Endothelial cell of umbilical vein (primary cell): ENCODE measurements at regions of chr1 and their contacts with region 1.

Region 1: GRCh38 chr1:3727042-3727824 is 25.0 kb upstream of the CCDC27 start:
- DNase-seq: no peak
- H3K4me3 ChIP-seq: no peak overlapping the region
- H3K27ac ChIP-seq: no peak overlapping the region
- H3K4me1 ChIP-seq: no peaks in the 10 kb centered on the region
- H3K27me3 ChIP-seq: no peaks in the 10 kb centered on the region
- CTCF ChIP-seq: peak; percentile 31 to 54
- POLR2A ChIP-seq: no peak

Region 2: DNA sequence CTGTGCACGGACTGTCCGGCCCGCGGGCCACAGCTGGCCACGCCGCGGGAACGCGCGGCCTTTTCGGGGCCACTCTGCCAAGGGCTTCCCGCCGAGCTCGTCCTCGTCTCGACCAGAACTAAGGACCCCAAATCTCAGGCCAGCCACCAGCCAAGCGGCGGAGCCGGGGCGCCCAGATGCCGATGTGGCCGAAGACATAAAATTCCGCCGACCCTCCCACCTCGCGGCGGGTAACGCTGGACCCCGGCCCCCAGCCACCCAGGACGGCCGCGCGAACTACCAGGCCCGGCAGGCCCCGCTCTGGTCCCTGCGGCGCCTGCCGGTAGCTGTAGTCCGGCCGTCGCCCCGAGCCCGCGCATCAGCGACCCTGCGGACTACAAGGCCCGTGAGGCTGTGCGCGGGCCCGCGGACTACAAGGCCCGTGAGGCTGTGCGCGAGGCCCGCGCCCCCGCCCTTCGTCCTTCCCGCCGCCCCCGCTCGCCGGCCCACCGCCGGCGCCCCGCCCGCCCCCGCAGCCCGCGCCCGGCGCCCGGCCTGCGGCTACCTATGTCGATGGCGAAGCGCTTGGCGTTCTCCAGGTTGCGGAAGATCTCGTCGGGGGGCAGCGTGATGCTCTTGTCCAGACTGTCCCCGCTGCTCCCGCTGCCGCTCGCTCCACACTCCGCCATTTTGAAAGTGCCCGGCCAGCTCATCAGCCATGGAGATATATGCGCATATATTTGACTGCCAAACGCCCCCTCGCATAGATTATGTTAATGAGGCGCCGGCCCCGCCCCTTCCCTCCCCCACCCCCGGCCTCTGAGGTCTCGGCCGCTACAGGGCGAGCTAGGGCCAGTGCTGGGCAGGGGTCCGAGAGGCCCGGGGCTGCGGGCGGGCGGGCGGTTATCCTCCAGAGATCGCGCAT is 1201.1 kb before region 1 on chr1 and contains the start of gene PANK4:
- CTCF ChIA-PET with region 1: no interaction called
- POLR2A ChIA-PET with region 1: interaction called, 11 read pairs
- dilution Hi-C with region 1: no loop called
- intact Hi-C with region 1: no loop called
- DNase-seq: peak; percentile 84
- H3K4me3 ChIP-seq: peak within 1 kb of the TSS; percentile 75 to 97 (median 91)
- H3K27ac ChIP-seq: peak within 1 kb of the TSS; percentile 58
- H3K4me1 ChIP-seq: peaks cover 17% of the 10 kb centered on the region
- H3K27me3 ChIP-seq: peaks cover 10 to 17% of the 10 kb centered on the region in 2 experiments
- CTCF ChIP-seq: no peak
- POLR2A ChIP-seq: peak; percentile 82
- total RNA-seq, gene PANK4: 34.0 and 34.7 TPM in 2 replicates

Region 3: GRCh38 chr1:3564921-3565827 is 162.1 kb before region 1 on chr1:
- CTCF ChIA-PET with region 1: interaction called, 11 read pairs
- POLR2A ChIA-PET with region 1: no interaction called
- dilution Hi-C with region 1: no loop called
- intact Hi-C with region 1: loop called (anchors 1 kb)
- DNase-seq: peak; percentile 26
- H3K4me3 ChIP-seq: no peak overlapping the region
- H3K27ac ChIP-seq: no peak overlapping the region
- H3K4me1 ChIP-seq: no peaks in the 10 kb centered on the region
- H3K27me3 ChIP-seq: no peaks in the 10 kb centered on the region
- CTCF ChIP-seq: peak; percentile 89 to 90
- POLR2A ChIP-seq: no peak

Region 4: DNA sequence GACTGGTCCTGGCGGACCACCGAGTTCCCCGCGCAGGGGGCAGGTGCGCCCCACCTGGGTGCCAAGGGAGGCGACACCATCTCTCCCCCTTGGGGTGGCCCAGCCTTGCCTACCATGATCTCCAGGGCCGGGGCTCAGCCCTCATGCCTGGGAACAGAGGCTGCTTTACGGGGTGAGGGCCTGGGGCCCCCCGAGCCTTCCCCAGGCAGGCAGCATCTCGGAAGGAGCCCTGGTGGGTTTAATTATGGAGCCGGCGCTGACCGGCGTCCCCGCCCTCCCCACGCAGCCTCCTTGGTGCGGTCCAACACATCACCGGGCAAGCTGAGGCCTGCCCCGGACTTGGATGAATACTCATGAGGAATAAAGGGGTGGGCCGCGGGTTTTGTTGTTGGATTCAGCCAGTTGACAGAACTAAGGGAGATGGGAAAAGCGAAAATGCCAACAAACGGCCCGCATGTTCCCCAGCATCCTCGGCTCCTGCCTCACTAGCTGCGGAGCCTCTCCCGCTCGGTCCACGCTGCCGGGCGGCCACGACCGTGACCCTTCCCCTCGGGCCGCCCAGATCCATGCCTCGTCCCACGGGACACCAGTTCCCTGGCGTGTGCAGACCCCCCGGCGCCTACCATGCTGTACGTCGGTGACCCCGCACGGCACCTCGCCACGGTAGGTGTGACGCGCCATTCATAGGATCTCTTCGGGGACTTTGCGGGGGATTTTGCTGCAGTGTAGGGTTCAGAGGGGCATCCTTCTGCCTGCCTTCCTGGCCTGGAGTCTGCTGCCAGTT is 36.8 kb before region 1 on chr1:
- CTCF ChIA-PET with region 1: interaction called, 31 read pairs
- POLR2A ChIA-PET with region 1: no interaction called
- dilution Hi-C with region 1: no loop called
- intact Hi-C with region 1: loop called (anchors 1 kb)
- DNase-seq: no peak
- H3K4me3 ChIP-seq: no peak overlapping the region
- H3K27ac ChIP-seq: no peak overlapping the region
- H3K4me1 ChIP-seq: no peaks in the 10 kb centered on the region
- H3K27me3 ChIP-seq: no peaks in the 10 kb centered on the region
- CTCF ChIP-seq: no peak
- POLR2A ChIP-seq: no peak

Region 5: DNA sequence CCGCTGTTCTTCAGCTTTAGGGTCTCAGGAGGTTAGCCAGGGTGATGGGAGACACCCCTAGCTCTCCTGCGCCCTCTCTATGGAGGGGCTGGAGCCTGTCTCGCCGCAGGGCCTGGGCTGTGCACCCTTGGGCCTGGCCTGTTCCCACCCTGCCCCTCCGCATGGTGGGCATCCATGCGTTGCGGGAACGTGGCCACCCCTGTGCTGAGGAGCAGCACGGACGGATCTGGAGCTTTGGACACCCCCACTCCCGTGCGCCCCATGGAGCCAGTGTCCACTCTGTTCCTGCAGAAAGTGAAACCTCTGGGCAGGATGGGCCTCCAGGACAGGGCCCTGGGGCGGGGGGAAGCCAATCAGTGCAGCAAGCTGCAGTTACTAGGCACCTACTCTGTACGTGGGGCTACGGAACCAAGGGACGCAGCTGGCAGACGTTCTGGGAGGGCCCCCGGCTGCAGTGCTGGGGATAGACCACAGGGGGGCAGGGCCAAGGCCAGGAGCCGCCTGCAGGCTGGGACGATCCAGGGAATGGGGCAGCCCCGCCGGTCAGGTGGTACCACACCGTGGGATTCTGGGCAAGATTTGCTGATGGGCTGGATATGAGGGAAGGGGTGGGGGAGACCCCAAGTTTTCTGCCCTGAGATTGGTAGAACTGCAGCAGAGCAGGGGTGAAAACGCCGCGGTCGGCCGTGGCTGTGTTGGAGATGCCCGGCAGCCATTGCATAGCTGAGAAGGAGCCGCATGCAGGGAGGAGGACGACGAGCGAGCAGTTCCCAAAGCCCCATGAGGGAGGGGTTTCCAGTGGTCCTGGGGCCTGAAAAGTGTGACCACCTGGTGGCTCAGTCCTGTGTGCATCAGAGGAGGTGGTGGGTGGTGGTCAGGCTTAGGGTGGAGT is 31.7 kb before region 1 on chr1:
- CTCF ChIA-PET with region 1: interaction called, 31 read pairs
- POLR2A ChIA-PET with region 1: no interaction called
- dilution Hi-C with region 1: no loop called
- intact Hi-C with region 1: loop called (anchors 1 kb)
- DNase-seq: peak; percentile 26
- H3K4me3 ChIP-seq: no peak overlapping the region
- H3K27ac ChIP-seq: no peak overlapping the region
- H3K4me1 ChIP-seq: no peaks in the 10 kb centered on the region
- H3K27me3 ChIP-seq: no peaks in the 10 kb centered on the region
- CTCF ChIP-seq: peak; percentile 72 to 86
- POLR2A ChIP-seq: no peak

Region 6: DNA sequence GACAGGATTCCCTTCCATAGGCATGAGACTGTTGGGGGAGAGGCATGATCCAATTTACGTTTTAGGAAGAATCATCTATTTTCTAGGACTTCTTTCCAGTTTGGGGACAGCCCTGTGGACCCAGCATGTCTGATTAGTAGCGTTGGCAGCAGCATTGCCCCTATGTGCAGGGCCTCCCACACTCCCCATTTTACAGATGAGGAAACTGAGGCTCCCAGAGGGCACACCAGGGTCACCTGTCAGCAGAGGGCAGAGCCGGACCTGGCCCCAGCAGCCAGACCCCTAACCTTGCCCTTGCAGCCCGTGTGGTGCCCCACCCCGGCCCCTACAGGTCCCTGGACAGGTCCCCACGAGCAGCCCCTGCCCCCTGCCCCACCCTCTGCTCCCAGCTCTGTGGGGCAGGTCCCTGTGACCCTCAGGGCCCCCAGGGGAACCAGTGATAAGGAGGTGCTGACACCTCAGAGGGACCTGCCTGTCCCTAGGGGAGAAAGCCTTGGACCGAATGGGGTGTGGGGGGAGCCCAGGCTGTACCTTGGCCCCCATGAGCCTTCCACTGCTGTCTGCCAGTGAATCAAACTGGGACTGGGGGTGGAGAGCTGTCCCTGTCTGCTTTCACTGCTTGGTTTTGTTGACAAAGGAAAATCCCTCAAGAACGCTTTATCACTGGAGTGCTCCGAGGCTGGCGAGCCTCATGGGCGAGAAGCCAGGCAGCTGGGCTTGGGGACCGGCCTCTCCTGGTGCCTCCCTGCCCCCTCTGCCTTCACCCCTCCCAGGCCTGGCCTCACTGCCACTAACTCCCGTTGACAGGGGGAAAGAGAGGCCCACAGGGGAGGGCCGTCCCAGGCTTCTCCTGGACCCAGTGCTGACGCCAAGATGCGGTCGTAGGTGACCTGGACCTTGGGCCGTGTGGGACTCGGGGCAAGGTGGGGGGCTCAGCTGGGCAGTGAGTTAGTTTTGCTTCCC is 14.4 kb before region 1 on chr1:
- CTCF ChIA-PET with region 1: interaction called, 20 read pairs
- POLR2A ChIA-PET with region 1: no interaction called
- dilution Hi-C with region 1: no loop called
- intact Hi-C with region 1: no loop called
- DNase-seq: no peak
- H3K4me3 ChIP-seq: no peak overlapping the region
- H3K27ac ChIP-seq: no peak overlapping the region
- H3K4me1 ChIP-seq: no peaks in the 10 kb centered on the region
- H3K27me3 ChIP-seq: no peaks in the 10 kb centered on the region
- CTCF ChIP-seq: no peak
- POLR2A ChIP-seq: no peak

Region 7: DNA sequence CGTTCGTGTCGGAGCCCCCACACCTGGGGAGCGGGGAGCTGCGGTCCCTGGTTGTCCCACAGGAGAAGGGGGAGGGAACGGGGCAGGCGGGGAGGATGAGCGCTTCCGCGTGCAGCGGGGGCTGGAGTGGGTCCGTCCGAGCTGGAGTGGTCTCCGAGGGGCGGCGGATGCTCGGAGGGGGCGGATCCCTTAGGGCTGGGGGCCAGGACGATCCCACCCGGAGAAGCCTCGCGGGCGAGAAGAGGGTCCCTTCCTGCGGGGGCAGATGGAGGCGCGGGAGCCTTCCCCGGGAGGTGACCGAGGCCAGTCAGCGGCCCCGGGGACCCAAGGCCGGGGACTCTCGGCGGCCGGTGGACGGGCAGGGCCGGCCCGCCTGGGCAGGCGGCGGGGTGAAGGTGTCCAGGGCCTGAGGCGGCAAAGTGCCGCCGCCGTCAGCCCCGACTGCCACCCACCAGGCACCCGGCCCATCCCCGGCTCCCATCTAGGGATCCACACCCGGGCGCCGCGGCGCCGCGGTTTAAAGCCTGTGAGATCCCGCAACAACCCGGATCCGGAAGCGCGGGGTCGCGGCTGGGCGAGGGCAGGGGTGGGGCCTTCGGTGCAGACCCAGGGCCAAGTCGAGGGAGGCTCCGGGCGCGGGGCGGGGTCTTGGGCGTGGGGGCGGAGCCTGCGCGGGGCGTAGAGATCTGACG is 19.7 kb after region 1 on chr1:
- CTCF ChIA-PET with region 1: interaction called, 11 read pairs
- POLR2A ChIA-PET with region 1: no interaction called
- dilution Hi-C with region 1: no loop called
- intact Hi-C with region 1: no loop called
- DNase-seq: peak; percentile 77
- H3K4me3 ChIP-seq: peak overlapping the region; percentile 67 to 79 (median 74)
- H3K27ac ChIP-seq: peak overlapping the region; percentile 24
- H3K4me1 ChIP-seq: peaks cover 11% of the 10 kb centered on the region
- H3K27me3 ChIP-seq: peaks cover 0 to 7% of the 10 kb centered on the region in 2 experiments
- CTCF ChIP-seq: no peak
- POLR2A ChIP-seq: peak; percentile 85